ENCODE measurements at regions of chr3 and their contacts with region 1.

Region 1: DNA sequence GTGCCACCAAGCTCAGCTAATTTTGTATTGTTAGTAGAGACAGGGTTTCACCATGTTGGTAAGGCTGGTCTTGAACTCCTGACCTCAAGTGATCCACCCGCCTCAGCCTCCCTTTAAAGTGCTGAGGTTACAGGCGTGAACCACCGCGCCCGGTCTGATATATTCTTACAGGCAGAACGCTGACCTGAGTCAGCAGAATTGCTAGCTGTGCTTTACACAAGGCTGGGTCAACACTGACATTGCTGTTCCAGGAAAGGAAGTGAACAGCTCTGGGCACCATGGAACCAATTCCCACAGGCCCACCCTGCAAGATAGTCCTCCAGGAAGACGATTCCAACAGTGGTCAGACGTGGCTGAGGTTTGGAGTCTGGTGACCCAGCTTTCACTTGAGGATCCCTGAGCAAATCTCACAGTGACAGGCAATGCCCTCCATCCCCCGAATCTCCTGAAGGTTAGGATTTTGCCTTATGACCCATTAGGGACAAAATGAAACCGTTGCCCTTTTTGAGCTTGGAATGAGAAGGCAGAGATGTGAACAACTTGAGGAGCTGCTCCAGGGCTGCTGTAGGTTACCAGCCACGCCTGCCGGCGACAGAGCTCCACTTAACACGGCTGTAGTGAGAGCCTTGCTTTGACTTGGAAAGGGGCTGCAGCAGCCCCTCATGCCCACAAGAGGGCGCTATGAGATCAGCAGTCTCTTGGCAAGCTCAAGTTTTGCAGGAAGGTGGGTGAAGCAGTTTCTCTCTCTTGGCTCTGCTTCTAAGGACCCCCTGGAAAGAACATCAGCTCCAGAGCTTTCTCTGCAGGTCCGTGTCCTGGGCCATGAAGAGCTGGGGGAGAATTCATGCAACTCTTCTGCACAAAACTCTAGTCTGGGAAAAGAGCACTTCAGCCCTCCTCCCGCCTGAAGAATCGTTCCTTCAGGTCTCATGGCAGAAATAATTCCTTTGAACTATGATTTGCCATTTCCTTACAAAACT is 74.1 kb downstream of the SENP2 start:
- DNase-seq: peak; percentile 72 to 84 (median 80)
- H3K4me3 ChIP-seq: no peak overlapping the region
- H3K27ac ChIP-seq: no peak overlapping the region
- H3K4me1 ChIP-seq: peaks cover 13% of the 10 kb centered on the region
- H3K27me3 ChIP-seq: no peaks in the 10 kb centered on the region
- CTCF ChIP-seq: peak; percentile 84 to 96 (median 92)
- EP300 ChIP-seq: no peak
- POLR2A ChIP-seq: no peak

Region 2: DNA sequence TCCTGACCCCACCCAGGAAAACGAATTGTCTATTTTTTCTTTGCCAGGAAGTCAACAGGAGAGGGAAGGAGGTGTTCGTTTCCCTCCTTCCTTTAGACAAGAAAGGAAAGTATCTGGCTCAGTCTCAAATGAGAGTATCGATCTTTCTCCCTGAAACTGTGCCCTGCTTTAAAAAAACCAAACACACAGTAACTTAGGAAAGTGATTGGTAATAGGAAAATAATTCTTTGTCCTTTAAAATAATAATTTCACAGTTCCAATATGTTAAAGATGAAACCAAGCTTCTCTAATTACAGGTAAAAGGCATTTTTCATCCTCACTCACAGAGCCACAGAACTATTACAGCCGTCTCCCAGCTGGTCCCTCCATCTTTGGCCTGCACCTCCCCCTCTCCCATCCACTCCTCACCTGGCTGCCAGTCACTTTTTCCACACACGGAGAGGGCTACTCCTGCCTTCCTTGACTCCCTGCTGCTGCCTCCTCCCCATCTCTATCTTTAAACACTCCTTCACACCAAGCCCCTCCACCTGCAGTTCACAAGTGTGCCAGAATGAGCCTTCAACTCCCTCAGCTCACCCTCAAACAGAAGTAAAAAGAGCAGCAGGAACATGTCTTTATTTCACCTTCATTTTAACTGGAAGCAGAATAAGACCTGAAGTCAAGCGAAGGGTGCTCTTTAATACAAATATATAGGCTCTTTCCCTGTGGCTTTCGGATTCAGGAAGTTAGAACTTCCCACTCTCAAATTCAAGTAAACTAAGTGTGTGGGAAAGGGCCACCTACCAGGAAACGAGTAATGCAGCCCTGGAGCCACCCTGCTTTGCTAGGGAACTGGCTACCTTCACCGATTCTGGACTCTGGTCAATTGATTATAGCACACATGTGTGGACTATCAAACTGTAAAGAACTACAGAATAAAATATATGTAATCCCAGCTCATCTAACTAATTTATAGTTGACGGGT is 42.3 kb after region 1 on chr3:
- intact Hi-C with region 1: no loop called
- DNase-seq: no peak
- H3K4me3 ChIP-seq: no peak overlapping the region
- H3K27ac ChIP-seq: no peak overlapping the region
- H3K4me1 ChIP-seq: no peaks in the 10 kb centered on the region
- H3K27me3 ChIP-seq: no peaks in the 10 kb centered on the region
- CTCF ChIP-seq: no peak
- EP300 ChIP-seq: no peak
- POLR2A ChIP-seq: no peak

Region 3: GRCh38 chr3:185764163-185764979 is 104.1 kb after region 1 on chr3:
- intact Hi-C with region 1: loop called in 1 of 4 experiments (anchors 10 kb)
- DNase-seq: peak in 1 of 5 donors; percentile 25
- H3K4me3 ChIP-seq: no peak overlapping the region
- H3K27ac ChIP-seq: peak overlapping the region in 1 of 2 donors; percentile 44
- H3K4me1 ChIP-seq: peaks cover 8% of the 10 kb centered on the region
- H3K27me3 ChIP-seq: no peaks in the 10 kb centered on the region
- CTCF ChIP-seq: no peak
- EP300 ChIP-seq: no peak
- POLR2A ChIP-seq: no peak

Region 4: DNA sequence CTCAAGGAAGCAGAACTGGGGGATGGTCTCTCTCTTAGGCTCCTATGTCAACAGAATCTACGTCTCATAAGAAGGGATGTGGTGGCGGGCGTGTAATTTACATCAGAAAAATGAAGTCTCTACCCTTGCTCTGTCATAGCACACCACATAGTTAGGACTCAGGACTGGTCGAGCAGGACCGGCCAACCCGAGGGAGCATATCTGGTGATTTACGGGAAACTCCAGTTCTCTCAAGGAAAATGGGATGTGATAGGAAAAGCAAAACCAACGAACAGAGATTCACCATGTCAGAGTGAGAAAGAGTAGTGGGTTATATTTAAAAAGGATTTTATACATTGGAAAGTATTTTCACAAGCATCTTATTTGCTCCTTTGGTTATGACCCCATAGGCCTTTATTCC is 109.9 kb after region 1 on chr3:
- intact Hi-C with region 1: loop called in 2 of 4 experiments (anchors 5 to 10 kb)
- DNase-seq: no peak
- H3K4me3 ChIP-seq: no peak overlapping the region
- H3K27ac ChIP-seq: no peak overlapping the region
- H3K4me1 ChIP-seq: peaks cover 2% of the 10 kb centered on the region
- H3K27me3 ChIP-seq: no peaks in the 10 kb centered on the region
- CTCF ChIP-seq: no peak
- EP300 ChIP-seq: no peak
- POLR2A ChIP-seq: no peak

Region 5: DNA sequence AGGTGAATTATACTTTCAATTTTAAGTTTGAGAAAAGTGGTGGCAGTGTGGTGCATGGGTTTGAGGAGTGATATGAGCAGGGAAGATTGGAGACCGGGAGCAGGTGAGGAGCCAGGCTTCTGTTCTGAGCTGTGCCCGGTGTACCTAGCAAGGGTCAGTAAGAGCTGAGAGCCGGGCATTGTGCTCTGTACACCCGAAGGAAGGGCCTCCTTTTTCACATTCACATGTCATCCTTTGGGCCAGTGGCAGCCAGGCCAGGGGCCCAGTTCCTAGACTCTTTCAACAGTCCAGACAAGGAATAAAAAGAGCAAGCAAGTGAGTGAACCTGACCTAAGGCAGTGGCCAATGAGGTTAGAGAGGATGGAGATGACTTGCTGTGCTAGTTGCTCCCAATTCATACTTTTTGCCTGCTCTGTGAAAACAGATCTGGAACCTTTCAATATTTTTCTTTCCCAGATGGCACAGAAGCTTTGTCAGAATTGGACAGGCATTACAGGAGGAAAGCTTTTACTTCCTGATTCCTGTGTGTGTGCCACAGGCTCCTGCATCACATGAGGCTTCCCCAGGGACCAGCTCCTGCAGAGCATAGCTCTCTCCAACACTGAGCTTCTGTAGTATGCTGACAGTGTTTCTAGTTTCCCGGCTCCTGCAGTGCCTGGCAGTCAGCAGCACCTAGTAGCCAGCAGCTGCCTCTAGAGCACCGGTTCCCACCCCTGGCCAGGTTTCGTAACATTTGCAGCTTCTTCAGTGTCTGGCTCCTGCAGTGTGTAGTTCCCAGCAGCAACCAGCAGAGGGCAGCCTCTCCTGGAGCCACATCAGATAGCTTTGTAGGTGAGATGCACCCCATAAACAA is 282.9 kb after region 1 on chr3:
- intact Hi-C with region 1: loop called in 2 of 4 experiments (anchors 5 to 10 kb)
- DNase-seq: peak; percentile 72 to 86 (median 81)
- H3K4me3 ChIP-seq: no peak overlapping the region
- H3K27ac ChIP-seq: no peak overlapping the region
- H3K4me1 ChIP-seq: peaks cover 2% of the 10 kb centered on the region
- H3K27me3 ChIP-seq: no peaks in the 10 kb centered on the region
- CTCF ChIP-seq: peak; percentile 74 to 94 (median 82)
- EP300 ChIP-seq: no peak
- POLR2A ChIP-seq: no peak